Heart right ventricle (tissue), 16 donors: ENCODE measurements at regions of chr20 and their contacts with region 1.

Region 1: DNA sequence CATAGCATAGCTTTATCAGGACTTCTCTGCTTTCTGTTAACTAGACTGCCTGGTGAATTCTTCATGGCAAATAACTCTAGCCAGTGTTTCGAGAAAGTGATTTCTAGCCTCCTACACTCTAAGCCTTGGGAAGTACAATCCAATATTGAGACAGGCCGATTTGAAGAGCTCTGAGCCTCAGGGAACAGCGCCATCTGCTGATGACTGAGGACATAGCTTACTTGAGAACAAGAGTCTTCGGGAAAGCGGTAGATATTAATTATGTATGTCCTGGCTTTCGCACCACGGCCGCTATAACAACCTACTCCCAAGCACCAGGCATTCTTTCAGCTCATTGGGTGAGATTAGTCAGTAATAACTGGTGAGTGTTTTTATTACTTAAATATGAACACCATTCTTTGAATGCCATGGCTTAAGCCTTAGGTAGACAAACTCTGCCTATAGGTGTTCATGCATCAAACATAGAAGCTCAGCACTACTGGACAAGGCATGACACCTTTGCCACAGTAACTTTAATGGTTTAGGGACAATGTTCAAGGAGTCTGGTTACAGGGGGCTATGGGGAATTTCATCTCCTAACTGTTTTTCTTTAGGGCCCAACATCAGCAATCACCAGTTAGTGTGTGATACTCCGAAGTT is 518.6 kb downstream of the BMP2 start:
- DNase-seq: peak; percentile 52 to 76
- ATAC-seq: peak; percentile 61 to 88 (median 78)
- H3K4me3 ChIP-seq: no peak overlapping the region
- H3K27ac ChIP-seq: no peak overlapping the region
- H3K4me1 ChIP-seq: peaks cover 0 to 6% (median 0%) of the 10 kb centered on the region in 9 donors
- H3K27me3 ChIP-seq: peaks cover 0 to 10% (median 0%) of the 10 kb centered on the region in 7 donors
- CTCF ChIP-seq: peak; percentile 58 to 90 (median 84)

Region 2: GRCh38 chr20:6178537-6178936 is 1107.5 kb before region 1 on chr20:
- intact Hi-C with region 1: loop called in 1 of 10 experiments (anchors 10 kb)
- DNase-seq: peak in 1 of 2 donors; percentile 8
- ATAC-seq: no peak
- H3K4me3 ChIP-seq: no peak overlapping the region
- H3K27ac ChIP-seq: no peak overlapping the region
- H3K4me1 ChIP-seq: no peaks in the 10 kb centered on the region
- H3K27me3 ChIP-seq: peaks cover 0 to 4% (median 0%) of the 10 kb centered on the region in 7 donors
- CTCF ChIP-seq: peak in 7 of 9 donors; percentile 30 to 64 (median 47)

Region 3: DNA sequence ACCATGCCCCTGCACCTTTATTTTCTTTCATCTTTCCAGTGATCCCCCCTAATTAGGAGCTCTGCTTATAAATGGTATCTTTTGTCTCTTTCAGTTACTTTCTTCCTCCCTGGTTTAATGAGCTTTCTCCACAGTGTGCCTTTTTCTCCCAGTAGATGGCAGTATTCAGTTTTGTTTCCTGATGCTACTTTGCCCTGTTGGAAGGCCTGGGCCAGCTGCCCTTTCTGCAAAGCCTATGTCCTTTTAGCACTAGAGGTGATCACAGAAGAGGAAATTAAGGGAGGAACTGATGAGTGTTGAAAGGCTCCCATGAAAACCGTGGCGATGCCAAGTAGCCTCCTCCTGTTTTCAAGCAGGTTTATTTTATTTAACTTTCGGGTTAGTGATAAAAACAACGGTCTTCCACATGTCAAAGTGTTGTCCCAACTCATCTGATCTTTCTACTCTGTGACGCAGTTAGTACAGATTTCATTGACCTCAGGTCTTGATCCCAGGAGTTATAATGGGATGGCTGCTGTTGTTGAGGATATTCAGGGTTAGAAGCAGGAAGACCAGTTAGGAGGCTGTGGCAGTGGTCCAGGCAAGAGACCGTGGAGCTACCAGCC is 702.8 kb before region 1 on chr20:
- intact Hi-C with region 1: loop called in 1 of 10 experiments (anchors 10 kb)
- DNase-seq: peak; percentile 28 to 47
- ATAC-seq: peak in 7 of 8 donors; percentile 49 to 84 (median 70)
- H3K4me3 ChIP-seq: no peak overlapping the region
- H3K27ac ChIP-seq: no peak overlapping the region
- H3K4me1 ChIP-seq: no peaks in the 10 kb centered on the region
- H3K27me3 ChIP-seq: no peaks in the 10 kb centered on the region
- CTCF ChIP-seq: peak; percentile 16 to 73 (median 67)

Region 4: GRCh38 chr20:6828794-6829423 is 457.1 kb before region 1 on chr20:
- intact Hi-C with region 1: loop called in 5 of 10 experiments (anchors 5 to 10 kb)
- DNase-seq: peak; percentile 15 to 65
- ATAC-seq: peak in 7 of 8 donors; percentile 43 to 85 (median 75)
- H3K4me3 ChIP-seq: no peak overlapping the region
- H3K27ac ChIP-seq: no peak overlapping the region
- H3K4me1 ChIP-seq: no peaks in the 10 kb centered on the region
- H3K27me3 ChIP-seq: no peaks in the 10 kb centered on the region
- CTCF ChIP-seq: peak; percentile 57 to 83 (median 72)

Region 5: DNA sequence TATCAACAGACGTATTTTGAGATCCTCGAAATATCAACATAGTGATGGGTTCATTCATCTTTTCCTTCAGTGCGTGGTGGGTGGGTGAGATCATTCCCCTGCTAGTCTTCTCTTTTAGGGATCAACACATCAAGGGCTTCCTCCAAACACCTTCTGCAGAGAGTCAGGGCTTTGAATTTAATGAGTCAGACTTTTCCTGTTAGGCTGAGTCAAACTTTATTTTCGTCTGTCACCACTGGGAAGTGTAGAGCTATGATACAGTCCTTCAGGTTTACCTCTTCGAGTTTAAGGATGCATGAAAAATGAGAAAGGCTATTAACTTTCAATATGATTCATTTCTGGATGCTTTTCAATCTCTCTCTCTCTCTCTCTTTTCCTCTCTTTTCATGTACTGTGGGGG is 329.5 kb before region 1 on chr20:
- intact Hi-C with region 1: no loop called
- DNase-seq: no peak
- ATAC-seq: no peak
- H3K4me3 ChIP-seq: no peak overlapping the region
- H3K27ac ChIP-seq: no peak overlapping the region
- H3K4me1 ChIP-seq: peaks cover 0 to 9% (median 0%) of the 10 kb centered on the region in 9 donors
- H3K27me3 ChIP-seq: no peaks in the 10 kb centered on the region
- CTCF ChIP-seq: no peak

Region 6: GRCh38 chr20:7171911-7172310 is 114.1 kb before region 1 on chr20:
- intact Hi-C with region 1: loop called in 1 of 10 experiments (anchors 10 kb)
- DNase-seq: no peak
- ATAC-seq: no peak
- H3K4me3 ChIP-seq: no peak overlapping the region
- H3K27ac ChIP-seq: no peak overlapping the region
- H3K4me1 ChIP-seq: no peaks in the 10 kb centered on the region
- H3K27me3 ChIP-seq: peaks cover 0 to 5% (median 0%) of the 10 kb centered on the region in 7 donors
- CTCF ChIP-seq: no peak